Left cardiac atrium (tissue), 4 donors: ENCODE measurements at regions of chr7 and their contacts with region 1.

Region 1: DNA sequence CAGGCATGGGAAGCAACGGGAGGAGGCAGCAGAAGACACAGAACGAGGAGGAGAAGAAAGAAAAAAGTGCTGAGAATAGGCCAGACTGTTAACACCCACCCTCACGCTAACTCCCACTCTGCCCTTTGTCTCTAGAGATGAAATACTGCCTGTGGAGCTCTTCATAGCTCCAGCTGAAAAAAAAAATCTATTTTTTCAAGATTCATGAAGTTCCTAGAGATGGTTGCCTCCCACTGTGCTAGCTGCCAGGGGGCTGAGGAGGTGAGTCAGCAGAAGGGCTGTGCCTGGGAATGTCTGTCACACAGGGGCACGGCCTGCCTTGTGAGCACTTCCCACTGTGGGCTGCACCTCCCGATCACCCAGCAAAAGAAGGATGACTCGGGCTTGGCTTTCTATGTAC is 144.5 kb downstream of the RNF216 start:
- DNase-seq: peak; percentile 83
- ATAC-seq: peak; percentile 62 to 94

Region 2: GRCh38 chr7:5193880-5194279 is 443.0 kb before region 1 on chr7:
- intact Hi-C with region 1: no loop called
- DNase-seq: no peak
- ATAC-seq: no peak

Region 3: DNA sequence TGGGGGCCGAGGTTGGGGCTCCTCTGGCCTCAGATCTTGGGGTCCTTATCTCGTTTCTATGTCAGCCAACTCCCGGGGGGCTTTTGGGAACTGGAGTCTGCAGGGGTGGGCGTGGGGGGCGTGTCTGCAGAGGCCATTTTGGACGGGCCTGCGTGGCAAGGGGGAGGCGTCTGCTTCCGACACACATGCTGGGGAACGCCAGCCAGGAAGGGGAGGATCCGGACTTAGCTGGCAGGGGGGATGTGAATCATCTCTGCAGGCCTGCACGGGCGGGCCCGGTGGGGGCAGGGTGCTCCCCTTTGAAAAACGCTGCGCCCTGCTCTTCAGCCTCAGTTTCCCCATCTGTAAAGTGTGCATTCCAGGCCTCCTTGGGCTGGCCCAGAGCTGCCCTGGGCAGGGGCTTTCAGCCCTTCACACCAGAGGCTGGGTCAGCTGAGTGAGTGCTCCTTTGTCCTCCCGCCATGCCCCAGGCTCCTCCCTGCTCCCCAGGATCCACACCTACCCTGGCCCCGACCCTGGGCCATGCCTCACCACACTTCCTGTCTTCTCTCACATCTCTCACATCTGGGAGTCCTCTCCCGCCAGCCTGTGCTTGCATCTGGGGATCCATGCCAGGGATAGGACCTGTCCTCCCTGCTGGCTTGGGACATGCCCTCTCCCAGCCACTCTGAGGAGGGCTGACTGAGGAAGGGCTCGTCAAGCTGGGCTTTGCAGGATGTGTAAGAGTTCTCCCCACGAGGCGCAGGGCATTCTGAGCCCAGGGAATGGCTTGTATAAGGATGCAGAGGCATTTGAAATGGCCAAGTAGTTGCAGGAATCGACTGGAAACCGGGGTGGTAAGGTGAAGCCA is 40.6 kb before region 1 on chr7:
- intact Hi-C with region 1: loop called in 1 of 2 experiments (anchors 5 kb)
- DNase-seq: peak; percentile 93
- ATAC-seq: peak; percentile 59 to 77

Region 4: GRCh38 chr7:5714657-5715337 is 77.9 kb after region 1 on chr7:
- intact Hi-C with region 1: no loop called
- DNase-seq: no peak
- ATAC-seq: no peak